Right ventricle myocardium superior (tissue), 1 donor: ENCODE measurements at regions of chr19 and their contacts with region 1.

Region 1: GRCh38 chr19:18469069-18469846 is 31.3 kb upstream of the ISYNA1 start:
- DNase-seq: peak; percentile 82
- ATAC-seq: peak; percentile 30

Region 2: GRCh38 chr19:18397242-18398202 is 71.7 kb before region 1 on chr19 and contains the start of gene LRRC25:
- intact Hi-C with region 1: no loop called
- DNase-seq: peak; percentile 77
- ATAC-seq: peak; percentile 62
- total RNA-seq, gene LRRC25: 3.6 TPM

Region 3: DNA sequence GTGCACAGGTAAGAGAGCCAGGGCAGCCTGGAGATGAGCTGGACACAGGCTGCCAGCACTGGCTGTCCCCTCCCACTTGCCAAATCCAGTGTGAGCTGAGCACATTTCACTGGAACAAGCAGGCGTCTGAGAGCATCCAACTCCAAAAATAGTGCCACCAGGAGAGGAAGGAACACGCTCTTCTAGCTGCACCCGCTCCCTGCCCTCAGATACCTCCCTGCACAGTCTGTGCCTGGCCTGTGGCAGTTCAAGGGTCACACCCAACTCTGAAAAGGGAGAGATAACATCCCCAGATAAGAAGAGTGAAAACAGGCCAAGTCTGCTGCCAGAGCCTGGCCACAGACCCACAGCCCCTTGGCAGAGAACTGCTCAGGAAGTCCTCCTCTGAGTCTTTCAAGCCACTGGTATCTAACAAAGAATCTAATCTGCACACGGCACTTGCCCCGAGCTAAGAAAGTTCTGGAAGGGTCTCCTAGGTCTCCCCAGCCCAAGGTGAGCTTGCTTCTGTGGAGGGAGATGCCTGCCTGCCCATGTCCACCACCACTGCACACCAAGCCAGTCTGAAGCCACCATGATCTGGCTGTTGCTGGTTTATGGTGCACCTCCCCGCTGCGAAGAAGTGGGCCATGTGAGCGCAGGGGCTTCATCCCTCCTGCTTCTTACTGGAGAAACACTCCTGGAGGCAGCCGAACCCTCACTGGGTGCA is 37.9 kb after region 1 on chr19:
- intact Hi-C with region 1: loop called (anchors 5 kb)
- DNase-seq: peak; percentile 76
- ATAC-seq: peak; percentile 78